ENCODE measurements at regions of chr10 and their contacts with region 1.

Region 1: GRCh38 chr10:13787015-13787421 is 200.3 kb downstream of the PRPF18 start:
- DNase-seq: peak; percentile 50
- ATAC-seq: peak; percentile 80
- H3K4me3 Mint-ChIP-seq: peak overlapping the region; percentile 80
- H3K27ac Mint-ChIP-seq: peak overlapping the region; percentile 97
- H3K4me1 Mint-ChIP-seq: peaks cover 57% of the 10 kb centered on the region
- H3K27me3 Mint-ChIP-seq: no peaks in the 10 kb centered on the region
- CTCF ChIP-seq: no peak

Region 2: GRCh38 chr10:13299437-13300287 is 487.4 kb before region 1 on chr10 and contains the start of gene PHYH:
- CTCF ChIA-PET with region 1: no interaction called
- POLR2A ChIA-PET with region 1: no interaction called
- intact Hi-C with region 1: loop called (anchors 5 kb)
- DNase-seq: peak; percentile 83
- ATAC-seq: peak; percentile 69
- H3K4me3 Mint-ChIP-seq: peak within 1 kb of the TSS; percentile 87
- H3K27ac Mint-ChIP-seq: peak within 1 kb of the TSS; percentile 82
- H3K4me1 Mint-ChIP-seq: peaks cover 27% of the 10 kb centered on the region
- H3K27me3 Mint-ChIP-seq: no peaks in the 10 kb centered on the region
- CTCF ChIP-seq: no peak
- total RNA-seq, gene PHYH: 10.4 and 10.8 TPM in 2 replicates

Region 3: GRCh38 chr10:13769955-13770354 is 17.1 kb before region 1 on chr10:
- CTCF ChIA-PET with region 1: no interaction called
- POLR2A ChIA-PET with region 1: no interaction called
- intact Hi-C with region 1: no loop called
- DNase-seq: no peak
- ATAC-seq: peak; percentile 58
- H3K4me3 Mint-ChIP-seq: no peak overlapping the region
- H3K27ac Mint-ChIP-seq: no peak overlapping the region
- H3K4me1 Mint-ChIP-seq: peaks cover 6% of the 10 kb centered on the region
- H3K27me3 Mint-ChIP-seq: peaks cover 30% of the 10 kb centered on the region
- CTCF ChIP-seq: no peak

Region 4: DNA sequence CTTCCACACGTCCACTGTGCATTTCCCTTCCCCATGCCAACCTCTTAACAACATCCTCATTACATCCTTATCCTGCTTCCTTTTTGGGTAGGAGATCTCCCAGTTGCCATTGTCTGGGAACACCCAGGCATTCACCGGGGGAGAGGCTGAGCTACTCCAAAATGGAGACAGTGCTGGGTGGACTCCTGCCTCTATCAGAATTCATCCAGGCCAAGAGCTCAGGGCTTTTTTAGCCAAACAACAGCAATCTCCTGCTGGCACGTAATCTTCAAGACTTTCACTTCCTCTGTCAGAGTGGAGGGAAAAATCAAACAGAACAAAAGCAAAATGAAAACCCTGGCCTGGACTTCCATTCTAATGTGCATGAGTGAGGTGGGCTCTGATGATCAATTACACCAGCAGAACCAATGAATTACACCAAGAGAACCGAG is 44.7 kb after region 1 on chr10:
- CTCF ChIA-PET with region 1: no interaction called
- POLR2A ChIA-PET with region 1: interaction called, 3 read pairs
- intact Hi-C with region 1: loop called (anchors 2 kb)
- DNase-seq: no peak
- ATAC-seq: peak; percentile 89
- H3K4me3 Mint-ChIP-seq: peak overlapping the region; percentile 62
- H3K27ac Mint-ChIP-seq: peak overlapping the region; percentile 82
- H3K4me1 Mint-ChIP-seq: peaks cover 30% of the 10 kb centered on the region
- H3K27me3 Mint-ChIP-seq: peaks cover 2% of the 10 kb centered on the region
- CTCF ChIP-seq: no peak

Region 5: DNA sequence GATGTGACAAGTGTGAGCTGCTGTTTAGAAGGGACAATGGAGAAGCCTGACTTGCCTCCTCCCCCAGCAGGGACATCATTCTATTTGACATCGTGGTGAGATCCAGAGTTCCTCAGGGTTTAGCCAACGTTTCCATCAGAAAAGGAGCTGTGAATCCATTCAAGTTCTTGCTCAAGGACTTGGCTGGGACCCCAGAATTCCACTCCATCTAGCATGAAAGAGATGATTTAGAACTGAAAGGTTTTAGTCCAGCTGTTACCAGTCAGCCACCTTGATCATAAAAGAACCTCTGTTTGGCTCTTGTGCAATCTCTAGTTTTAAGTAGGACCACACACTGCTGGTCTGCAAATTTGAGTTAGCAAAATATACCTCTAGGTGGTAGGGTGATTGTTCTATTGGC is 206.2 kb after region 1 on chr10:
- CTCF ChIA-PET with region 1: interaction called, 4 read pairs
- POLR2A ChIA-PET with region 1: interaction called, 3 read pairs
- intact Hi-C with region 1: loop called (anchors 1 kb)
- DNase-seq: no peak
- ATAC-seq: peak; percentile 13
- H3K4me3 Mint-ChIP-seq: peak overlapping the region; percentile 16
- H3K27ac Mint-ChIP-seq: peak overlapping the region; percentile 42
- H3K4me1 Mint-ChIP-seq: peaks cover 47% of the 10 kb centered on the region
- H3K27me3 Mint-ChIP-seq: no peaks in the 10 kb centered on the region
- CTCF ChIP-seq: no peak

Region 6: DNA sequence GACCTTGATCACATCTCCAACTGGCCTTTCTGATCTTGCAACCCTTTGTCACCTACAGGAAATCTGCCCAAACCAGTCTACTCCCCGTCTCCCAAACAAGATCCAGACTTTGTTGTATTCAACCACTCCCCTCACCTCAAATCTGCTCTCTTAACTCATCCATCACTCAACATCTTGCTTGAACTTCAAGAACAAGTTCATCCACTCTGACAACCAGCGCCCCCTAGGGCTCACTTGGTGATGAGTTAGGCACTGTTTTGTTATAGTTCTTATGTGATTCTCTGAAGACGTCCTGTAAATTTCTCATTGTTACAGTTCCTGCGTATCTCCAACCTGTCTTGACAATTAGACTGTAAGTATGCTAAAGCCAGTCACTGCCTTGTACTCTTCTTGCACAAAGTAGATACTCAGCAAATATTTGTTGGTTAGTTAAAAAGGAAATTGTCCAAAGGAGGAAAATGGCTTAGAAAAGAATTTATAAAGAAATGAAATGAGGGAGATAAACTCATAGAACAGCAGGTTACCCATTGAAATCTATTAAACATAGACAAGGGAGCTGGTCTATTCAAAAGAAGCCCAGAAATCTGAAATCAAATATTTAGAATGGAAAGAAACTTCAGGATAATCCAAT is 538.4 kb after region 1 on chr10:
- CTCF ChIA-PET with region 1: no interaction called
- POLR2A ChIA-PET with region 1: no interaction called
- intact Hi-C with region 1: loop called (anchors 10 kb)
- DNase-seq: no peak
- ATAC-seq: no peak
- H3K4me3 Mint-ChIP-seq: no peak overlapping the region
- H3K27ac Mint-ChIP-seq: no peak overlapping the region
- H3K4me1 Mint-ChIP-seq: peaks cover 2% of the 10 kb centered on the region
- H3K27me3 Mint-ChIP-seq: peaks cover 35% of the 10 kb centered on the region
- CTCF ChIP-seq: no peak

Region 7: DNA sequence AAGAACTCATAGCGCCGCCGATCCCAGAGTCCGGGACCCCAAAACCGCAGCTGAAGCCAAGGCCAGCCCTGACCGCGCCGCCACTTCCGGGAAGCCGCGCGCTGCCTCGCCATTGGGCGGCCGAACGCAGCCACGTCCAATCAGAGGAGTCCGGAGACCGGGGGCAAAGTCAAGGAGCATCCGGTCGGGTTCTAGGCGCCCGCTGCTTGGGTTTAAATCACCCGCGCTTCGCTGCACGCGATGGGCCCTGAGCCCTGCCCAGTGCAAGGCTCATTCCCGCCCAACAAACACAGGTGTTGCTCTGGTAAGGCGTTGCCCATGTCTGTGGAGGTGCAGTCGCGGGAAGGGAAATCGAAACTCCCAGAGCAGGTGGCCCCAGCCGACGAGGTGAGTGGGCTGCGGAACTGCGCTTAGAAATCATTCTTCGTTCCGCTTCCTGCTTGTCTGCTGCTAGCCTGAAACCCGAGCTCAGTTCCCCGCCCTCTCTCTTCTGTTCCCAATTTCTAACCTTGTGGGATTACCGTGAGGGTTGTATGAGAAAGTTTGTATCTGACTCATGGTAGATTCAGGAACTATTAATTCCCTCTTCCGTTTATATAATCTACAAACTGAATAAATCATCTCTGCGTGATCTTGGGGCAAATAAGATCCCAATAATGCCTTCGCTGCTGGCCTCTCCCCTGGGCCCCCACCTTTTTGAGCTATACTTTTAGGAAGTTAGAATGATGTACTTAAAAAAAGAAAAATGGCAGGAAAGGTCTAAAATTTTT is 1167.2 kb after region 1 on chr10 and contains the start of gene DCLRE1C:
- CTCF ChIA-PET with region 1: no interaction called
- POLR2A ChIA-PET with region 1: no interaction called
- intact Hi-C with region 1: loop called (anchors 5 kb)
- DNase-seq: peak; percentile 77
- ATAC-seq: peak; percentile 78
- H3K4me3 Mint-ChIP-seq: peak within 1 kb of the TSS; percentile 90
- H3K27ac Mint-ChIP-seq: peak within 1 kb of the TSS; percentile 96
- H3K4me1 Mint-ChIP-seq: peaks cover 56% of the 10 kb centered on the region
- H3K27me3 Mint-ChIP-seq: no peaks in the 10 kb centered on the region
- CTCF ChIP-seq: no peak
- total RNA-seq, gene DCLRE1C: 38.0 and 43.8 TPM in 2 replicates